ENCODE measurements at regions of chr19 and their contacts with region 1.

Region 1: DNA sequence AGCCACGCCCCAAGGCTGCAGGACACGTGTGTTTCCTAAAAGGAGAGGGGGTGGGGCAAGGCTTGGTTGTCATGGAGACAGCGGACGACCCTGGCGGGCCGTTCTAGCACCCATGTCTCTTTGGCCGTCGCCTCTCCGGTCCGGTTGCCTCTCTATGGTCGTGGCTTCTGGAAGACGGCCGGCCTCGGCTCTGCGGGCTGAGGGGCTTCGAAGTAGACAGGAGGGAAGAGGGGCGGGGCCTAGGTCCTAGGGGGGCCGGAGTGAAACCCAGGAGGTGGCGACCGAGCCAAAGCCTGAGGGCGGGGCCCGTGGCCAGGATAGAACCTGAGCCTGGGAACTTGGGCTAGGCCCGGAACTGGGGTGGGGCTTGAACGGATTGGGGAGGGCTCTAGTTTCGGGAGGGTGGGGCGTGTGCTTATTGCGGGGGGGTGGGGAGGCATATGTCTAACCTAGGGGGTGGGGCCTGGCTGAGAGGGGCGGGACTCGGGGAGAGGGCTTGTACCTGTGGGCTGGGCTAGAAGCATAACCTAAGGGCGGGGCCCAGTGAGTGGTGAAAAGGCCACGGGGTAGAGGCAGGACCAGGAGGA is 750 bp upstream of the SLC27A1 start:
- DNase-seq: peak; percentile 96
- ATAC-seq: peak; percentile 86
- H3K4me3 Mint-ChIP-seq: peak overlapping the region; percentile 92
- H3K27ac Mint-ChIP-seq: peak overlapping the region; percentile 94
- H3K4me1 Mint-ChIP-seq: peaks cover 31% of the 10 kb centered on the region
- H3K27me3 Mint-ChIP-seq: no peaks in the 10 kb centered on the region
- CTCF ChIP-seq: no peak

Region 2: DNA sequence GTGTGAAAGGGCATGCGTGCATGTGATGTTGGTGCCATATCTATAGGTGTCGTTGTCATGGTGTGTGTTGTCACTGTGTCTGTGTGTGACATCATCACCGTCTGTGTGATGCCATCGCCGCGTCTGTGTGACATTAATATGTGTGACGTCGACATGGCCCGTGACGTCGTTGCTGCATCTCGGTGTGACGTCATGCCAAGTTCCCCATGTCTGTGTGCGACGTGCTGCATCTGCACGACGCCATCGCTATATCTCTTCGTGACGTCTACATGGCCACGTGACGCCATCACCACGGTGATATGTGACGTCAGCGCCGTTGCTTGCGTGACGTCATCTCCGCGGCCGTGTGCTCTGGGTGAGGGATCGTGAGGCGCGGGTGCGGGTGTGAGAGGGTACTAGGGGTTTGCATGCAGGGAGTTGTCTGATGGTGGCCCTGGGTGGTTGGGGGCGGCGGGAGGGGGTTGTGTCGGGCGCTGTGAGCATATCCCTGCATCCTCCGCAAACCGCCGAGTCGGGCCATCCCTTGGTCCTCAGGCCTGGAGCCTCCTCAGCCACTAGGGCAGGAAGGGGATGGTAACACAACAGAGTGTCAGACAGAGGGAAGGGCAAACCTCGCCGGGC is 117.6 kb before region 1 on chr19:
- CTCF ChIA-PET with region 1: no interaction called
- POLR2A ChIA-PET with region 1: no interaction called
- intact Hi-C with region 1: no loop called
- DNase-seq: no peak
- ATAC-seq: no peak
- H3K4me3 Mint-ChIP-seq: no peak overlapping the region
- H3K27ac Mint-ChIP-seq: no peak overlapping the region
- H3K4me1 Mint-ChIP-seq: peaks cover 5% of the 10 kb centered on the region
- H3K27me3 Mint-ChIP-seq: peaks cover 23% of the 10 kb centered on the region
- CTCF ChIP-seq: no peak

Region 3: GRCh38 chr19:17370026-17370587 is 99.5 kb before region 1 on chr19:
- CTCF ChIA-PET with region 1: no interaction called
- POLR2A ChIA-PET with region 1: no interaction called
- intact Hi-C with region 1: no loop called
- DNase-seq: no peak
- ATAC-seq: peak; percentile 34
- H3K4me3 Mint-ChIP-seq: no peak overlapping the region
- H3K27ac Mint-ChIP-seq: no peak overlapping the region
- H3K4me1 Mint-ChIP-seq: peaks cover 7% of the 10 kb centered on the region
- H3K27me3 Mint-ChIP-seq: peaks cover 7% of the 10 kb centered on the region
- CTCF ChIP-seq: no peak

Region 4: DNA sequence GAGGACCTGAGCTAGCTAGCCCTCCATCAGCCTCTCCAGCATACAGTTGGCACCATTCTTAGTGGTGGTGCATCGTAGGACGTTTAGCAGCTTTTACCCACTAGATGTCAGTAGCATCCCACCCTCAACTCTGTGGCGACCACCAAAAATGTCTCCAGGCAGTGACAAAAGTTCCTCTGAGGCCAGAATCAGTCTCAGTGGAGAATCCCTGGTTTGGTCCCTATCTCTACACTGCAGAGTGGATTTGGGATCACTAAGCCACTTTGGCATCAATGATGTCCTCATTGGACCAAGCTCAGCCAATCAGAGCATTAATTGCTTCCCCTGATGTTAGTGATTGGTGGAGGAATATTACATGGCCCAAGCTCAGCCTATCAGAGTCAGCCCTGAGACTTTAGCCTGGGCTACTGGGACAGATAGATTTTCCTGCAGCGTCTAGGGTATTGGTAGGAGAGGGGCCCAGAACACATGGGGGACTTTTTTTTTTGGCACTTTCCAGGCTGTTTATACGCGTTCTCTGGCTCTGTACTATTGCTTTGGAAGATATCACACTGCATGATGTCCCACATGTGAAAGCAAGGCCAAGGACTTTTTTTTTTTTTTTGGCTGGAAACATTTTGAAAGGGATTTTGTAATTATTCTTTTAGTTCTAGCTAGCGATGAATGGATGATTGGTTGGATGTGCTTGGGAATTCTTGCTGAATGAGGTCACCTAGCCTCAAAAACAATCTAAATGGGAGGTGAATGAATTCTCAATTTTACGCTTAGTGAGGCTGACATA is 28.1 kb before region 1 on chr19:
- CTCF ChIA-PET with region 1: interaction called, 24 read pairs
- POLR2A ChIA-PET with region 1: no interaction called
- intact Hi-C with region 1: no loop called
- DNase-seq: peak; percentile 57
- ATAC-seq: peak; percentile 93
- H3K4me3 Mint-ChIP-seq: no peak overlapping the region
- H3K27ac Mint-ChIP-seq: no peak overlapping the region
- H3K4me1 Mint-ChIP-seq: no peaks in the 10 kb centered on the region
- H3K27me3 Mint-ChIP-seq: no peaks in the 10 kb centered on the region
- CTCF ChIP-seq: peak; percentile 71

Region 5: DNA sequence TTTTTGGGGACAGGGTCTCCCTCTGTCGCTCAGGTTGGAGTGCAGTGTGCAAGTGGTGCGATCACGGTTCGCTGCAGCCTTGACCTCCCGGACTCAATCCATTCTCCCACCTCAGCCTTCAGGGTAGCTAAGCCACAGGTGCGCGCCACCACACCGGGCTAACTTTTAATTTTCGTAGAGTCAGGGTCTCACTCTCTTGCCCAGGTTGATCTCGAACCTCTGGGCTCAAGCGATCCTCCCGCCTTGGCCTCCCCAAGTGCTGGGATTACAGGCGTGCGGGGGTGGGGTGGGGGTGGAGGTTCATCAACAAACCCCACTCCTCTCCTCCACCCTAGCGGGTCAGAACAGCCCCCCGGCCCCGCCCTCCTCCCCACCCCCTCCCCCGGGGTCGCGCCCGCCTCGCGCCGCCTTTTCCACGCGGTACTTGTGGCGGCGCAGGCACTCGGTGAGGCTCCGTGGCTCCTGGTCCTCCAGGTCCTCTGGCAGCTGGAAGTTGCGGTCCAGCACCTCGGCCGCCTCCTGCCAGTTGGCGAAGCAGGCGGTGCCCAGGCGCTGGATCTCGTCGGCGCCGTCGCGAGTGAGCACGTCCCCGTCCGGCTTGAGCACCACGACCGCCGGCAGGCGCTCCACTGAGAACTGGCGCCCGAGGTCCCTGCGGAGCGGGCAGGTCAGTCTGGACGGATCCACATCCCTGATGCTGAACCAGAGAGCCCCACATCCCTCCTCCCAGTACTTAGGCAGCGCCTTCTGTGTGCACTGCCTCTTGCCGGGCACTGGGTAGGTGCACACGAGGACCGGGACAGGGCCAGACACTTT is 14.1 kb before region 1 on chr19:
- CTCF ChIA-PET with region 1: interaction called, 21 read pairs
- POLR2A ChIA-PET with region 1: no interaction called
- intact Hi-C with region 1: no loop called
- DNase-seq: no peak
- ATAC-seq: no peak
- H3K4me3 Mint-ChIP-seq: no peak overlapping the region
- H3K27ac Mint-ChIP-seq: no peak overlapping the region
- H3K4me1 Mint-ChIP-seq: peaks cover 13% of the 10 kb centered on the region
- H3K27me3 Mint-ChIP-seq: peaks cover 35% of the 10 kb centered on the region
- CTCF ChIP-seq: no peak

Region 6: DNA sequence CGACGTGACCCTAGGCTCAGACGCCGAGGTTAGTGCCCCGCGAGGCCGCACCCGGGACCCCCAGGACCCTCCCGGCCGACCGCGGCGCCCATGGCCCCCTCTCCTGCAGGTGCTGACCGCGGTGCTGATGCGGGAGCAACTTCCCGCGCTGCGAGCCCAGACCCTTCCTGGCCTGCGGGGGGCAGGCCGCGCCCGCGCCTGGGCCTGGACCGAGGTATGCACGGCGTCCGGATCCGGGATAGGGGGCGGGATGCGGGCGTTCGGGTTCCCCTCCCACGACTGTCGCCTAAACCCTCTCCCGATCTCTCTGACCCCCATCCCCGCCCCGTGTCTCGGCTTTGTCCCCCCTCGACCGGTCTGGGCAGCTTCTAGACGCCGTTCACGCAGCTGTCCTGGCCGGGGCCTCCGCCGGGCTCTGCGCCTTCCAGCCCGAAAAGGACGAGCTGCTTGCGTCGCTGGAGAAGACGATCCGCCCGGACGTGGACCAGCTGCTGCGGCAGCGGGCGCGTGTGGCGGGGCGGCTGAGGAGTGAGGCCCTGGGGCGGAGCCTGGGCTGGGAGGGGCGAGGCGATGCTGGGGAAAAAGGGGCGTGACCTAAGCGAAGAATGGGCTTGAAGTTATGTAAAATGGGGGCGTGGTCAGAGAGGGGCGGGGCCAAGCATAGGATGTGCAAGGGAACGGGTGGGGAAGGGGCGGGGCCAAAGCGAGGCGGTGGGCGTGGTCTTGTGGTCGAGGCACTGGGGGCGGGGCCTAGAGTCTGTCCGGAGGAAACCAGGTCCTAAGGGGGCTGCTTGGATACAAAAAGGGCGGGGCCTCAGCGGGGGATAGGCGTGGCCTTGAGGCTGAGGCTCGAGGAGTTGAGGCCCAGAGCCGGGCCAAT is 69.9 kb after region 1 on chr19:
- CTCF ChIA-PET with region 1: no interaction called
- POLR2A ChIA-PET with region 1: no interaction called
- intact Hi-C with region 1: no loop called
- DNase-seq: peak; percentile 100
- ATAC-seq: peak; percentile 97
- H3K4me3 Mint-ChIP-seq: peak overlapping the region; percentile 74
- H3K27ac Mint-ChIP-seq: peak overlapping the region; percentile 25
- H3K4me1 Mint-ChIP-seq: peaks cover 13% of the 10 kb centered on the region
- H3K27me3 Mint-ChIP-seq: peaks cover 4% of the 10 kb centered on the region
- CTCF ChIP-seq: no peak